Ovary (tissue), 10 donors: ENCODE measurements at regions of chr13 and their contacts with region 1.

Region 1: GRCh38 chr13:102845630-102846260 is at the start of gene ERCC5:
- DNase-seq: peak; percentile 91 to 95 (median 95)
- H3K4me3 ChIP-seq: peak within 1 kb of the TSS; percentile 99
- H3K27ac ChIP-seq: peak within 1 kb of the TSS; percentile 79 to 94
- H3K4me1 ChIP-seq: peaks cover 2% of the 10 kb centered on the region
- H3K27me3 ChIP-seq: no peaks in the 10 kb centered on the region
- CTCF ChIP-seq: peak in 2 of 3 donors; percentile 13 to 25
- EP300 ChIP-seq: no peak
- POLR2A ChIP-seq: peak; percentile 83
- total RNA-seq, gene ERCC5: 38.4 to 65.2 (median 46.1) TPM

Region 2: DNA sequence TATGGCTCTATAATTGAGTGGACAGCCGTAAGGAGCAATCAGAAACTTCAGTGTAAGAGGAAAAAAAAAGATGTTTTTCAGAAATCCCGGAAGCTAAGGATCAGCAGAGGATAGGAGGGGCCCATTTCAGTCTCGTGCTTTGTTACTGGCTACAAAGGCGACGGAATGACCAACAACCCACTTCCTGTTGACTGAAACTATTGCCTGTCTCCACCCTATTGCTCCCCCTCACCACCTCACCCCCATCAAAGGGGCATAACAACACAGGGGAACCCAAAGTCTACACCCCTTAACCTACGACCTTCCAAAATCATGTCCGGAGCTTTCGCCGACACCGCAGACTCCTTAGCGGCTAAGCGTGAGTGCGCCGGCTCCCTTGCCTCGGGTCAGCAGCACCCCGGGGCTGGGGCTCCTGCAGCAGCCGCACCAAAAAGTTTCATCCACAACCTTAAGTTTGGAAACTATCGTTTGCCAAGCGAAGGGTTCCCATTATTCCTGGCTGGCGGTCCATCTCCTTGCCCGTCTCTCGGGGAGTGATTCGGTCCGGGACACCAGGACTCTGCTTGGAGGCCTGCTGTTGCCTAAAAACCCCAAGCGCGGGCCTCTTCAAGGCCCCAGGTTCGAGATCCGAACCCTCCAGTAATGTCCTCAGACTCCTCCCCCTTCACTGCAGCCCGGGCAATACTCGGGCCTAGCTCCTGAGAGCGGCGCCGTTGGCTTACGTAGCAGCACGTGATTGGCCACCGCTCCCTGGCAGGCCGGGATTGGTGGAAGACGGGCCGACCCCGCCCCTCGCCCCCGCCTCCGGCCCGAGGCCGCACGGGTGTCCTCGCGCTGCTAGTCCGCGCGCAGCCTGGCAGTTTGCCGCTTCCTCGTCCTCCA is 249.4 kb before region 1 on chr13 and contains the start of gene TPP2:
- intact Hi-C with region 1: loop called in 2 of 4 experiments (anchors 2 to 5 kb)
- DNase-seq: peak; percentile 99 to 100 (median 99)
- H3K4me3 ChIP-seq: peak within 1 kb of the TSS; percentile 97
- H3K27ac ChIP-seq: peak within 1 kb of the TSS; percentile 97 to 100
- H3K4me1 ChIP-seq: peaks cover 5% of the 10 kb centered on the region
- H3K27me3 ChIP-seq: no peaks in the 10 kb centered on the region
- CTCF ChIP-seq: peak in 1 of 3 donors; percentile 8
- EP300 ChIP-seq: no peak
- POLR2A ChIP-seq: peak; percentile 67
- total RNA-seq, gene TPP2: 27.8 to 50.7 (median 36.5) TPM

Region 3: DNA sequence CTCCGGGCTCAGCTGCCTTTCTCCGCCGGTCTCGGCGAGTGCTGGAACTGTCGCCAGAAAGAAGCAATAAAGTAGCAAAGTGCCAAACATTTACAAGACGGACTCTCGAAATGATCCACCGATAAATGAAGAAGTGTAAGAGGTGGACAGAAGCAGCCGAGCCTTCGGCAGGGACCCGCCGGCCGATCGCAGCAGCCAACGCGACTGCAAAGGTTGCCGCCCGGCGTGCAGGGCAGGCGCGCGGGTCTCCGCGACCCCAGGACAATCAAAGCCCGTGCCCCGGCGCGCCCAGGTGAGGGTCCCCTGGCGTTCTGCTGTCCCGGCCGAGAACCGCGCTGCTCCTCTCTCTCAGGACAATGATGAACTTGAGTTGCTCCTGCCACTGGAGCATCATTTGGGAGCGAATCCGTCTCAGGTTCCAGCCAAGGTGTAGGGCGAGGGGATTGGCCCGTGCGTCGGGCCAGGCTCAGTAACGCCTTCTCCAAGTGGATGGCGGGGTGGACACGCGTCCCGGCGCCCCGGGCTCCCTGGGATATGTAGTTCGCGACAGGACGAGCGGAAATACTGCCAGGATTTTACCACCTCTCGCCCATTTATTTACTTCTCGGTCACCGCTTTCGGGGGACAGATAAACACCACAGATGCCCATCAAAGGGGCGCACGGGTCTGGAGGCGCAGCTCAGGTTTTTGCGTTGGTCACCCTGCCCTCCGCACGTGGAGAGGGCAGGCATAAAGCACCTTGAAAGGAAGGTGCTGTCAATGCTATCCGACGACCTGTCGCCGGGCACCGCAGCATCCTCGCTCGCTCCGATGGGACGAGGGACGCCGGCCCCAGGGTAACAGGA is 46.9 kb before region 1 on chr13 and contains the starts of genes BIVM and POGLUT2:
- intact Hi-C with region 1: loop called in 1 of 4 experiments (anchors 10 kb)
- DNase-seq: peak; percentile 85 to 92 (median 90)
- H3K4me3 ChIP-seq: peak within 1 kb of the TSS; percentile 73
- H3K27ac ChIP-seq: peak within 1 kb of the TSS; percentile 12 to 72
- H3K4me1 ChIP-seq: peaks cover 2% of the 10 kb centered on the region
- H3K27me3 ChIP-seq: no peaks in the 10 kb centered on the region
- CTCF ChIP-seq: no peak
- EP300 ChIP-seq: no peak
- POLR2A ChIP-seq: no peak
- total RNA-seq, gene BIVM: 10.4 to 25.0 (median 21.9) TPM
- total RNA-seq, gene POGLUT2: 4.5 to 8.1 (median 6.3) TPM